Colonic mucosa (tissue), 4 donors: ENCODE measurements at regions of chr14 and their contacts with region 1.

Region 1: GRCh38 chr14:70317969-70318634 is 41.4 kb downstream of the COX16 start:
- DNase-seq: peak; percentile 44
- H3K4me3 ChIP-seq: no peak overlapping the region
- H3K27ac ChIP-seq: no peak overlapping the region
- H3K4me1 ChIP-seq: no peaks in the 10 kb centered on the region
- H3K27me3 ChIP-seq: no peaks in the 10 kb centered on the region
- CTCF ChIP-seq: peak; percentile 37

Region 2: DNA sequence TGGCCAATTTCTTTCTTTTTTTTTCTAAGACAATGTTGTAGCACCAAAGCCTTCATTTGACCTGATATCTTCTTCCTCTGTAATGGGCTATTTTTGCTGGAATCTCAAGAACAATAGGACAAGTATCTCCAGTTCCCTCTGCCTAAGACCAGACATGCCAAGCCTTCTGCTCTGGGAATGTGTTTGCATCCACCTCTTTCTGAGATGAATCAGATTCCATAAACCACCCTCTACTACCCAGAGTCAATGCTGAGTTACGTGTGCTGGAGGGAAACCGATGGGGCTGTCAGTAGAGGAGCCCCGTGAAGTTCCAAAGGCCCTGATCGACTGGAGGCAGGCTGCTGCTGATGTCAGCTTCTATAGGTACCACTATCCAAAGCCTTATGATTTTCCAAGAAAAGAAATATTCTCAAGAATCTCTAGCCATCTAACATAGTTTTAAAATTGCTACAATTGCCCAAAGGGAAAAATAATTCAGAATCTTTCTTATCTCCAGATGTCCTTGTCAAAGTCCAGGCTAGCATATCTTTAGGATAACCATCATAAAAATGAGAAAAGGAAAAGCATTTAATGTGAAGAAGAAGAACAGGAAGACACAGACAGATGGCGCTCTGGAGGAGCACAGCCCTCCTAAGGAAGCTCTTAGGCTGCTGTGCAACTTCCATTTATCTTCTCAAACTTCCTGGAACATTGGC is 231.3 kb before region 1 on chr14:
- intact Hi-C with region 1: loop called (anchors 5 kb)
- DNase-seq: peak; percentile 33
- H3K4me3 ChIP-seq: no peak overlapping the region
- H3K27ac ChIP-seq: no peak overlapping the region
- H3K4me1 ChIP-seq: no peaks in the 10 kb centered on the region
- H3K27me3 ChIP-seq: no peaks in the 10 kb centered on the region
- CTCF ChIP-seq: peak; percentile 32

Region 3: DNA sequence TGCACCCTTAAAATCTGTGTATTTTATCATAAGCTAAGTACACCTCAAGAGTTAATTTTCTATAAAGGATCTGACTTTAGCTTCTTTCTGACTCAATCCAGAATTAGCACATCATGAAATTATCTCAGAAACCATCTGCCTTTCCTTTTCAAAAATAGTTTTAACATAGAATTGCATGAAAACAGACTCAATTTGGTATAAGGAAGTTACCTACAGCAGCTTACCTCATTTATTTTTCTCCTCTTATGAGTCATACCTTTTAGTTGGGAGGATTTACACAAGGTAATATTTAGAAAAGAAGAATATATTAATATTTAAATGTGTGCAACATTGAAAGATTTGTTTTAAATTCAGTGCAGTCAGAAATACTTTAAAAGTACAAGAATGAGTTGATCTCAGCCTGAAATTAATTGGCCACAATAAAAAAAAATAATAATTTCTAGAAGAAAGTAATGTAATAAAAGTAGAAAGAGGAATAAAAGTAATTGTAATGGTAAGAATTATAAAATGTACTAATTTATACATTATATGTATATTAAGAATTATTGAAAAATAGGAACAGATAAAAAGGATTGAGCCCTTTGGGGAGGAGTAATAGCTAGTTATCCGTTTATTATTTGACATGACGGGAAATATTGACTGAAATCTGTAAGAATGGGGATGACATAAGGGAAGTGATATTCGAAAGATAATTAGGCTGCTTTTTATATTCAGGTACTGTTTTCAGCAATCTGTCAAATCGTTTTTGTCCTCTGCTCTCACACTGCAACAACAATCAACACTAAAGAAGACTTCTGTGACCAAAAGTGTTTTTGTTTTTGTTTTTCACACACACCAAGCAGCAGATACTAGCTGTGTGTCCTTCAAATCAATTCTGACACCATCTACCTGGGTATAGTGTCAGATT is 154.4 kb after region 1 on chr14:
- intact Hi-C with region 1: no loop called
- DNase-seq: no peak
- H3K4me3 ChIP-seq: no peak overlapping the region
- H3K27ac ChIP-seq: no peak overlapping the region
- H3K4me1 ChIP-seq: no peaks in the 10 kb centered on the region
- H3K27me3 ChIP-seq: no peaks in the 10 kb centered on the region
- CTCF ChIP-seq: no peak